ENCODE measurements at regions of chr19 and their contacts with region 1.

Region 1: GRCh38 chr19:4400135-4400936 is at the start of gene SH3GL1:
- DNase-seq: peak; percentile 88 to 95 (median 91)
- H3K4me3 ChIP-seq: peak within 1 kb of the TSS; percentile 65 to 99 (median 96)
- H3K27ac ChIP-seq: peak within 1 kb of the TSS in 57 of 59 donors; percentile 3 to 97 (median 89)
- H3K27me3 ChIP-seq: no peaks in the 10 kb centered on the region
- CTCF ChIP-seq: peak; percentile 80 to 99 (median 92)
- total RNA-seq, gene SH3GL1: 34.0 to 85.4 (median 48.4) TPM

Region 2: GRCh38 chr19:4267101-4267900 is 133.0 kb before region 1 on chr19:
- intact Hi-C with region 1: loop called (anchors 5 kb)
- DNase-seq: peak in 7 of 10 donors; percentile 28 to 60 (median 51)
- H3K4me3 ChIP-seq: no peak overlapping the region
- H3K27ac ChIP-seq: peak overlapping the region in 1 of 59 donors; percentile 13
- H3K27me3 ChIP-seq: no peaks in the 10 kb centered on the region
- CTCF ChIP-seq: peak; percentile 39 to 87 (median 78)

Region 3: GRCh38 chr19:4369888-4370260 is 30.5 kb before region 1 on chr19:
- intact Hi-C with region 1: loop called (anchors 1 to 2 kb)
- DNase-seq: peak in 9 of 10 donors; percentile 58 to 82 (median 68)
- H3K4me3 ChIP-seq: peak overlapping the region in 38 of 59 donors; percentile 1 to 40 (median 21)
- H3K27ac ChIP-seq: peak overlapping the region in 57 of 59 donors; percentile 13 to 99 (median 94)
- H3K27me3 ChIP-seq: no peaks in the 10 kb centered on the region
- CTCF ChIP-seq: peak in 53 of 56 donors; percentile 35 to 78 (median 63)

Region 4: GRCh38 chr19:4375164-4376027 is 24.9 kb before region 1 on chr19:
- intact Hi-C with region 1: loop called (anchors 1 to 2 kb)
- DNase-seq: peak in 8 of 10 donors; percentile 57 to 81 (median 73)
- H3K4me3 ChIP-seq: peak overlapping the region in 25 of 59 donors; percentile 1 to 40 (median 19)
- H3K27ac ChIP-seq: peak overlapping the region; percentile 73 to 99 (median 96)
- H3K27me3 ChIP-seq: no peaks in the 10 kb centered on the region
- CTCF ChIP-seq: peak in 49 of 56 donors; percentile 11 to 65 (median 44)

Region 5: DNA sequence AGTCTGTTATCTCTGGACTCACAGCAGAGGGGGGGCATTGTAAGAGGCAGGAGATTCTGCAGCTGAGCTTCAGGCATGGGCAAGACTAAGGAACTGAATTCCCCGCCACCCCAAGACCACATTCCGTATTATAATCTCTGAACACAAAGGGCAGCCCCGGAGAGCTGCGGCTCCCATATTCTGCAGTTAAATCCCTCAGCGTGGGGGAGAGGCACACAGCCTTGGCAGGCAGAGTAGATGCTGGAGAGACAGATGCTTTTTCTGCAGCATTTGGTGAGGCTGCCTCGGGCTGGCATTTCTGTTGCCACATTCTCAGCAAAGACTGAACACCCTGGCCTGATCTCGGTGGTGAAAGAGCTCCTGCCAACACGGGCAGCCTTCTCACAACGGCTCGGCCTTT is 15.0 kb after region 1 on chr19:
- intact Hi-C with region 1: no loop called
- DNase-seq: peak in 9 of 10 donors; percentile 31 to 78 (median 63)
- H3K4me3 ChIP-seq: peak overlapping the region in 7 of 59 donors; percentile 4 to 28 (median 12)
- H3K27ac ChIP-seq: peak overlapping the region in 54 of 59 donors; percentile 11 to 87 (median 64)
- H3K27me3 ChIP-seq: no peaks in the 10 kb centered on the region
- CTCF ChIP-seq: no peak

Region 6: DNA sequence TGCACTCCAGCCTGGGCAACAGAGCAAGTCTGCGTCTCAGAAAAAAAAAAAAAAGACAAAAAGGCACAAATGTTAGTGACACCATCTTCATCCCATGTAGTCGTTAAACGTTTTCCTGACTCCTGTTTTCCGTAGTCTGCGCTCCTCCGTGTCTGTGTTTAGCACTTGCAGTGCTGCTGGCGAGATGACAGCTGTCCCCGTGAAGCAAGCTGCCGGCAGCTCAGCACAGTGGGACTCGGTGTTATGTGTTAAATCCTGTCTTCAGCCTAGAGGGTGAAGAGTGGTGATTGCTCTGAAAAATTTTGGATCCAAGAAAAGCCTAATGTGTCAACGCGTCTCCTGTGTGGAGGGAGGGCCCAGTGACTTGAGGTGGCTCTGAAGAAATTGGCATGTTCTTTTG is 38.9 kb after region 1 on chr19:
- intact Hi-C with region 1: no loop called
- DNase-seq: peak in 6 of 10 donors; percentile 46 to 81 (median 77)
- H3K4me3 ChIP-seq: no peak overlapping the region
- H3K27ac ChIP-seq: peak overlapping the region in 18 of 59 donors; percentile 14 to 78 (median 61)
- H3K27me3 ChIP-seq: no peaks in the 10 kb centered on the region
- CTCF ChIP-seq: no peak

Region 7: DNA sequence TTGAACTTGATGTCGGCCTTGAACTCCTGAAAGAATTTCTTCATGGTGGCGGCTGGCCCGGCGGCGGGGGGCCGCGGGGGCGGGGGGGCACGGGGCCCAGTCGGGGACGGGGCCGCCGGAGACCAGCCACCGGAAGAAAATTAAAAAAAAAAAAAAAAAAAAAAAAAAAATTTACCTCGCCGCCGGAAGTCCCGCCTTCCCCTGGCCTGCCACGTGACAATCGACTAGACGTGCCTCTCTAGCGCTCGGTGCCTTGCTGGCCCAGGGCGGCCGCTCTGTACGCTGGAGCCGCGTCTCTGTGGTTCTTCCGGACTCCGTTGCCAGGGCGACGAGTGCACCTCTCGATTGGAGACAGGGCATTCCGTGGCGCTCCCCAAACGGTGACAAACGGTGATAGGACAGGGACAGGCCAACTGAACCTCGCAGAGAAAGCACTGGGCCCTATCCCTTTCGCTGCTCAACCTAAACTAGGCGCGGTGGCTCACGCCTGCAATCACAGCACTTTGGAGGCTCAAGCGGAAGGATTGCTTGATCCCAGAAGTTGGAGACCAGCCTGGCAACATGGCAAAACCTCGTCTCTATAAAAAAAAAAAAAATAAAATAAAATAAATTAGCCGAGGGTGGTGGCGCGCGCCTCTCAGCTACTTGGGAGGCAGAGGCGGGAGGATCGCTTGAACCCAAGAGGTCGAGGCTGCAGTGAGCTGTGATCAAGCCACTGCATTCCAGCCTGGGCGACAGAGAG is 57.5 kb after region 1 on chr19 and contains the start of gene UBXN6:
- intact Hi-C with region 1: loop called (anchors 5 kb)
- DNase-seq: peak; percentile 97 to 99 (median 99)
- H3K4me3 ChIP-seq: peak within 1 kb of the TSS; percentile 52 to 85 (median 72)
- H3K27ac ChIP-seq: peak within 1 kb of the TSS in 57 of 59 donors; percentile 17 to 95 (median 83)
- H3K27me3 ChIP-seq: no peaks in the 10 kb centered on the region
- CTCF ChIP-seq: peak in 47 of 56 donors; percentile 11 to 65 (median 35)
- total RNA-seq, gene UBXN6: 110 to 244 (median 164) TPM

Measured in dorsolateral prefrontal cortex (tissue), 120 donors.